Panc1 (cell line): ENCODE measurements at regions of chr7 and their contacts with region 1.

Region 1: GRCh38 chr7:98014352-98014751 is 24.4 kb upstream of the OCM2 start:
- DNase-seq: no peak
- ATAC-seq: no peak
- H3K4me3 ChIP-seq: no peak overlapping the region
- H3K27ac ChIP-seq: no peak overlapping the region
- H3K4me1 ChIP-seq: peaks cover 6% of the 10 kb centered on the region; the same call in 1 of the 2 replicates
- H3K27me3 ChIP-seq: no peaks in the 10 kb centered on the region
- CTCF ChIP-seq: peak; percentile 2; the same call in 1 of the 2 replicates

Region 2: DNA sequence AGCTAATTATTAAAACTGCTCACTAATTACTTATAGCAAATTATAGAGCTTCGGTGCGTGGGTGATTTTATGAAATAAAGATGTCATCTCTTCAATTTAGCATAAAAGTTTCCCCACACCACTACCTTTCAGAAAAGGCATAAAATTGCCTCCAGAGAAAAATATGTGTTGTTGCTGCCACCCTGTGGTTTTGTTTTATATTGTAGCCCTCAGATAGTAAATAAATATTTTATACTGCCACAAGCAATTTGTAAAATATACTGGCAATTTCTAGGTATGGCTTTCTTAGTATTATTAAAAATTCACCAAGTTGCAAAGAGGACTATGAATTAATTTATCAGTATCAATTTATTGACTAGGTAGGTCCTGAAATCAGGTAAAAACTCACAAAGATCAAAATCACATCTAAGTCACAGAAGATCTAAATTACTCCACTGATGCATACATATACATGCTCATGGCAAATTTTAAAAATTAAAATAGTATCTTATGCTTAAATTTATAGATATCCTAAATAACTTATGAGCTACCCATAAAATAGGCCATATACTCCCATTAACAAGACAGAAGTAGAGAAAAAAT is 168.6 kb before region 1 on chr7:
- CTCF ChIA-PET with region 1: interaction called, 3 read pairs
- POLR2A ChIA-PET with region 1: no interaction called
- in situ Hi-C with region 1: no loop called
- intact Hi-C with region 1: loop called (anchors 5 kb)
- DNase-seq: peak; percentile 25
- ATAC-seq: no peak
- H3K4me3 ChIP-seq: no peak overlapping the region
- H3K27ac ChIP-seq: no peak overlapping the region
- H3K4me1 ChIP-seq: no peaks in the 10 kb centered on the region
- H3K27me3 ChIP-seq: no peaks in the 10 kb centered on the region
- CTCF ChIP-seq: peak; percentile 59; the same call in 1 of the 2 replicates

Region 3: GRCh38 chr7:98000356-98000755 is 14.0 kb before region 1 on chr7:
- CTCF ChIA-PET with region 1: interaction called, 10 read pairs
- POLR2A ChIA-PET with region 1: no interaction called
- in situ Hi-C with region 1: no loop called
- intact Hi-C with region 1: no loop called
- DNase-seq: no peak
- ATAC-seq: no peak
- H3K4me3 ChIP-seq: no peak overlapping the region
- H3K27ac ChIP-seq: no peak overlapping the region
- H3K4me1 ChIP-seq: no peaks in the 10 kb centered on the region
- H3K27me3 ChIP-seq: peaks cover 5% of the 10 kb centered on the region; the same call in 1 of the 2 replicates
- CTCF ChIP-seq: no peak